CD4-positive, alpha-beta T cell (primary cell): ENCODE measurements at regions of chr1 and their contacts with region 1.

Region 1: GRCh38 chr1:193479187-193479586 is 292.8 kb upstream of the B3GALT2 start:
- DNase-seq: peak; percentile 55 to 97 (median 72)
- ATAC-seq: peak; percentile 96
- H3K4me3 ChIP-seq: no peak overlapping the region
- H3K4me3 Mint-ChIP-seq: peak overlapping the region; percentile 67
- H3K27ac ChIP-seq: peak overlapping the region; percentile 68 to 77
- H3K27ac Mint-ChIP-seq: peak overlapping the region; percentile 92
- H3K4me1 ChIP-seq: peaks cover 11% of the 10 kb centered on the region
- H3K4me1 Mint-ChIP-seq: peaks cover 70% of the 10 kb centered on the region
- H3K27me3 ChIP-seq: no peaks in the 10 kb centered on the region
- H3K27me3 Mint-ChIP-seq: no peaks in the 10 kb centered on the region
- CTCF ChIP-seq: no peak

Region 2: GRCh38 chr1:193059268-193060225 is 419.6 kb before region 1 on chr1 and contains the starts of genes RO60 and UCHL5:
- CTCF ChIA-PET with region 1: no interaction called
- POLR2A ChIA-PET with region 1: no interaction called
- intact Hi-C with region 1: loop called in 1 of 2 experiments (anchors 5 kb)
- DNase-seq: peak; percentile 87 to 99 (median 92)
- ATAC-seq: peak; percentile 96
- H3K4me3 ChIP-seq: peak within 1 kb of the TSS; percentile 95
- H3K4me3 Mint-ChIP-seq: peak within 1 kb of the TSS; percentile 100
- H3K27ac ChIP-seq: peak within 1 kb of the TSS; percentile 83
- H3K27ac Mint-ChIP-seq: peak within 1 kb of the TSS; percentile 96
- H3K4me1 ChIP-seq: peaks cover 24% of the 10 kb centered on the region
- H3K4me1 Mint-ChIP-seq: peaks cover 78% of the 10 kb centered on the region
- H3K27me3 ChIP-seq: no peaks in the 10 kb centered on the region
- H3K27me3 Mint-ChIP-seq: no peaks in the 10 kb centered on the region
- CTCF ChIP-seq: no peak
- total RNA-seq, gene RO60: 46.1 to 46.3 TPM
- total RNA-seq, gene UCHL5: 16.4 to 19.2 TPM

Region 3: DNA sequence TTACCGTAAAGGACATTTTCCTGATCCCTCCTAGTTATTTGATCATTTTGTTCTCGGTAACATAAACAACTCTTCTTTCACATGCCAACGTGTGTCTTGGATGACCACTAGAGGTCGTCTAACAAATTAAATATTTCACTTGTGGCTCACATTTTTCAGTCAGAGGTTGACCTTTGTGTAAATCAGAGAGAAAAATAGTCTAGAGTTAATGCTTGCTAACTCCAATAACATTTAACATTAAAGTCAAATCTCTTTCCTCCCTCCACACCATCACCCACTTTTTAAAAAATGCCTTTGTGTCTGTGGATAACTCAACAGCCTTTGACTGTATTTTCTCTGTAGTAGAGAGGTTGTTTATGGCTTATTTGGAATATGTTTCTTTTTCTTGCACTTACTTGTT is 72.3 kb before region 1 on chr1:
- CTCF ChIA-PET with region 1: no interaction called
- POLR2A ChIA-PET with region 1: no interaction called
- intact Hi-C with region 1: loop called in 1 of 2 experiments (anchors 5 kb)
- DNase-seq: peak in 4 of 14 experiments; percentile 18 to 70 (median 69)
- ATAC-seq: peak; percentile 74
- H3K4me3 ChIP-seq: no peak overlapping the region
- H3K4me3 Mint-ChIP-seq: no peak overlapping the region
- H3K27ac ChIP-seq: no peak overlapping the region
- H3K27ac Mint-ChIP-seq: peak overlapping the region; percentile 28
- H3K4me1 ChIP-seq: no peaks in the 10 kb centered on the region
- H3K4me1 Mint-ChIP-seq: peaks cover 40% of the 10 kb centered on the region
- H3K27me3 ChIP-seq: no peaks in the 10 kb centered on the region
- H3K27me3 Mint-ChIP-seq: no peaks in the 10 kb centered on the region
- CTCF ChIP-seq: peak; percentile 86

Region 4: GRCh38 chr1:193456811-193457280 is 22.3 kb before region 1 on chr1:
- CTCF ChIA-PET with region 1: interaction called, 3 read pairs
- POLR2A ChIA-PET with region 1: interaction called, 55 read pairs
- intact Hi-C with region 1: loop called in 1 of 2 experiments (anchors 2 kb)
- DNase-seq: peak in 1 of 14 experiments; percentile 17
- ATAC-seq: no peak
- H3K4me3 ChIP-seq: peak overlapping the region; percentile 22
- H3K4me3 Mint-ChIP-seq: no peak overlapping the region
- H3K27ac ChIP-seq: peak overlapping the region in 1 of 2 donors; percentile 85
- H3K27ac Mint-ChIP-seq: no peak overlapping the region
- H3K4me1 ChIP-seq: peaks cover 30% of the 10 kb centered on the region
- H3K4me1 Mint-ChIP-seq: peaks cover 28% of the 10 kb centered on the region
- H3K27me3 ChIP-seq: no peaks in the 10 kb centered on the region
- H3K27me3 Mint-ChIP-seq: no peaks in the 10 kb centered on the region
- CTCF ChIP-seq: no peak

Region 5: DNA sequence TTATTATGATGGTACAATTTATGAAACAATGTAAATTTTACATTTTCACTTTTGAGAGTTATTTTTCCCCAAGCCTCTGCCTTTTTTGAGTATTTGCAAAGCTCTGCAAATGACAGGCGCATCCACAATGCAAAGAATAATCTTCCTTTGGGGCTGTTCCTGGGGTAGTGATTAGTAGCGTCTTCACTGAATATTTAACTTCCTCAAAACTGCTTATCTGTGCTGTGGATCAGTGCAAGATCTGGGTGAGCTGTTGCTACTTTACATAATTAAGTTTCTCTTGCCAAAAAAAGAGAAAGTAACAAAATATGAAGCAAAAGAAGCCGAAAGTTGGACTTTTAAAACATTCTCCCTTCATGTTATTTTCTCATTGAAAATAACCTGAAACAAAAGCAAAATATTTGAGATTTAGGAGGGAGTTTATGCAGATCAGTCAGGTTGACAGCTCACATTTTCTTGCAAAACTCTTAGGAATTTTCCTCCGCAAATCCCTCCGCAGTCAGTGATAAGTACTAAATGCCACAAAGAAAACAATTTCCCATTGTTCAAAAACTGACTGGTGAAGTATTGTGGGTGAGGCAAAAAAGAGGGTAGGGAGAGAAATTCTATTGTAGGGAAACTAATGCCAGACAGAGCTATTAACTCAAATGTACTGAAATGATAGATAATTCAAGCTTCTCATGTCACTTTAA is 16.4 kb before region 1 on chr1:
- CTCF ChIA-PET with region 1: interaction called, 3 read pairs
- POLR2A ChIA-PET with region 1: interaction called, 55 read pairs
- intact Hi-C with region 1: loop called in 1 of 2 experiments (anchors 2 kb)
- DNase-seq: peak in 4 of 14 experiments; percentile 29 to 62 (median 56)
- ATAC-seq: peak; percentile 41
- H3K4me3 ChIP-seq: peak overlapping the region; percentile 8
- H3K4me3 Mint-ChIP-seq: peak overlapping the region; percentile 35
- H3K27ac ChIP-seq: peak overlapping the region; percentile 16 to 20
- H3K27ac Mint-ChIP-seq: peak overlapping the region; percentile 75
- H3K4me1 ChIP-seq: peaks cover 19% of the 10 kb centered on the region
- H3K4me1 Mint-ChIP-seq: peaks cover 51% of the 10 kb centered on the region
- H3K27me3 ChIP-seq: no peaks in the 10 kb centered on the region
- H3K27me3 Mint-ChIP-seq: no peaks in the 10 kb centered on the region
- CTCF ChIP-seq: no peak

Region 6: DNA sequence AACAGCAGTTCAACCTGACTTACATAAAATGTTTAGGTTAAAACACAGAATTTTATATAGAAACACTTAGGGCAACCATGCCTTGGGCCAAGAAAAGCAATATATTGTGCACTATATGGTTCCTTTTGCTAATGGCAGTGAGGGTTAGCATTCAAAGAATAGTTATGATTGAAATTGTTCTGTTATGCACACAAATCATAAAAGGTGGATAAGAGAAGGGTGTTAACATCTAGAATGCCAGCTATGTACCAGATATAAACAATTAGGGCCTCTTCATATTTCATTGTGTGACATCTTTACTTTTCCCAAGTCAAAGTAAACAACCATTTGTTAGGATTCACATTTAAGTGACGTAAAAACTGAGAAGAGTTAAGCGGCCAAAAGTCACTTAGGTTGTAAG is 15.2 kb after region 1 on chr1:
- CTCF ChIA-PET with region 1: no interaction called
- POLR2A ChIA-PET with region 1: interaction called, 13 read pairs
- intact Hi-C with region 1: no loop called
- DNase-seq: no peak
- ATAC-seq: no peak
- H3K4me3 ChIP-seq: no peak overlapping the region
- H3K4me3 Mint-ChIP-seq: no peak overlapping the region
- H3K27ac ChIP-seq: no peak overlapping the region
- H3K27ac Mint-ChIP-seq: no peak overlapping the region
- H3K4me1 ChIP-seq: no peaks in the 10 kb centered on the region
- H3K4me1 Mint-ChIP-seq: peaks cover 29% of the 10 kb centered on the region
- H3K27me3 ChIP-seq: no peaks in the 10 kb centered on the region
- H3K27me3 Mint-ChIP-seq: no peaks in the 10 kb centered on the region
- CTCF ChIP-seq: no peak

Region 7: DNA sequence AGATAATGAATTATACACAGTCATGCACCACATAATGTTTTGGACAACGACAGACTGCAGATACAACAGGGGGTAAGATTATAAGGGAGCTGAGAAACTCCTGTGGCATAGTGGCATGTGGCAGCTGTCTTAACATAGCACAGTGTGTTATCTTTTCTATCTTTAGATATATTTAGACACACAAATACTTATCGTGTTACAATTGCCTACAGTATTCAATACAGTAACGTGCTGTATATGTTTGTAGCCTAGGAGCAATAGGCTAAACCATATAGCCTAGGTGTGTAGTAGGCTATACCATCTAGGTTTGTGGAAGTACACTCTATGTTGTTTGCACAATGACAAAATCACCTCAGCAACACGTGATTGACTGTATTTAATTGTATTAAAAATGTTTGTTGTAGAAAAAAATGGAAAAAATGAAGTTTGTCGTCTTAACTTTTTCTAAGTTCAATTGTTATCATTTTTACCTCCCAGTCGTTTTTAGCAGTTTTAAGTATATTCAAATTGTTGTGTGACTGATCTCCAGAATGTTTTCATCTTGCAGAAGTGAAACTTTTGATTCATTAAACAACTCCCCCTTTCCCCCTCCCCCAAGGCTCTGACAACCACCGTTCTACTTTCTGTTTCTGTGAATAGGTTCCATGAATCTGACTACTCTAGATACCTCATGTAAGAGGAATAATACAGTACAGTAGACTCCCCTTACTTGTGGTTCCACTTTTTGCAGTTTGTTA is 58.2 kb after region 1 on chr1:
- CTCF ChIA-PET with region 1: no interaction called
- POLR2A ChIA-PET with region 1: interaction called, 29 read pairs
- intact Hi-C with region 1: loop called in 1 of 2 experiments (anchors 5 kb)
- DNase-seq: peak in 13 of 14 experiments; percentile 9 to 86 (median 35)
- ATAC-seq: peak; percentile 79
- H3K4me3 ChIP-seq: peak overlapping the region; percentile 20
- H3K4me3 Mint-ChIP-seq: peak overlapping the region; percentile 50
- H3K27ac ChIP-seq: peak overlapping the region in 1 of 2 donors; percentile 32
- H3K27ac Mint-ChIP-seq: peak overlapping the region; percentile 78
- H3K4me1 ChIP-seq: peaks cover 21% of the 10 kb centered on the region
- H3K4me1 Mint-ChIP-seq: peaks cover 54% of the 10 kb centered on the region
- H3K27me3 ChIP-seq: no peaks in the 10 kb centered on the region
- H3K27me3 Mint-ChIP-seq: no peaks in the 10 kb centered on the region
- CTCF ChIP-seq: no peak